CD8-positive, alpha-beta memory T cell (primary cell): ENCODE measurements at regions of chr6 and their contacts with region 1.

Region 1: DNA sequence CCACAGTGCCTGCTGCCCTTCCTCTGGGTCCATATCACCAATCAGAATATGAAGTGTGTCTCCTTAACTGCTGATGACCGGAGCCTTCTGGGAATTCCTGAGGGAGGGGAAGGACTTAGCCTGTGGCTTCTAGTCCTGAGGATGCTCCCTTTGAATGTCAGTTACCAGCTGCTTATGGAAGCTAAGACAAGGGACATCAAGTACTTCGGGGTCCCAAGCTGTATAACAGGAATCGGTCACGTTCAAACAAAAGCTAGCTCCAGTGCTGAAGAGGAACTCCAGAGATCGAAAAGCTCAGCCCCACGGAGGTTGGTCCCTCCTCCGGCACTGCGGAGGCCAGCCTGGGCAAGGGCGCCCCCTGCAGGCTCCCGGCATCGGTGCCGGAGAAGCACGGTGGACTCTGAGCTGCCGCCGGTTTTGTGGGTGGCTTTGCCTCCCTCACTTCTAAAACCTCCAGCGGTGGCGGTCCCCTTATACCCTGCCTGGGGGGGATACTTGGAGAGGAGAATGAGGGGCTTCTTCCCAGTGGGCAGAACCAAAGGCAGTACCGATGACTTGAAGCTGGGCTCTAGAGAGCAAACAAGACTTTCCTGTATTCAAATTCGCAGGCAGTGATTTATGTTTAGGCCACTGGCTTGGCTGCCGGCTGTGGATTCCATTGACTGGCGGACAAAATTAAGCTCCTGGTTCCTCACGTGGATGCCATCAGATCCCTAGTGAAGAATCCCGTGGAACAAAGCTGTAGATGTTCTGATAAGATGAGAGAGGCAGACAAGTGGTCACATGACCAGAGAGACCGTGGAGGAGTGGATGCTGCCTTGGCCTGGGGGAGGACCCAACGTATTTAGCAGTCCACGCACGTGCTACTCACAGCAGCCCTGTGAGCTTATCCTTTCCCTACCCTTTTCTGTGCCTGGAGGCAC is 16.2 kb upstream of the UBR2 start:
- DNase-seq: peak; percentile 75 to 87 (median 82)
- H3K4me3 ChIP-seq: peak overlapping the region; percentile 62
- H3K4me3 Mint-ChIP-seq: peak overlapping the region in 6 of 7 donors; percentile 66 to 74 (median 70)
- H3K27ac ChIP-seq: no peak overlapping the region
- H3K27ac Mint-ChIP-seq: peak overlapping the region in 4 of 8 donors; percentile 47 to 86 (median 59)
- H3K4me1 ChIP-seq: peaks cover 11% of the 10 kb centered on the region
- H3K4me1 Mint-ChIP-seq: peaks cover 6 to 12% (median 12%) of the 10 kb centered on the region in 3 donors
- H3K27me3 ChIP-seq: no peaks in the 10 kb centered on the region
- H3K27me3 Mint-ChIP-seq: peaks cover 2 to 5% of the 10 kb centered on the region in 2 donors

Region 2: GRCh38 chr6:42260972-42261371 is 286.7 kb before region 1 on chr6:
- CTCF ChIA-PET with region 1: interaction called, 57 read pairs
- POLR2A ChIA-PET with region 1: no interaction called
- DNase-seq: peak in 2 of 5 donors; percentile 33 to 61
- H3K4me3 ChIP-seq: no peak overlapping the region
- H3K4me3 Mint-ChIP-seq: peak overlapping the region in 1 of 7 donors; percentile 41
- H3K27ac ChIP-seq: no peak overlapping the region
- H3K27ac Mint-ChIP-seq: peak overlapping the region in 5 of 8 donors; percentile 2 to 84 (median 52)
- H3K4me1 ChIP-seq: no peaks in the 10 kb centered on the region
- H3K4me1 Mint-ChIP-seq: peaks cover 13 to 14% (median 13%) of the 10 kb centered on the region in 3 donors
- H3K27me3 ChIP-seq: no peaks in the 10 kb centered on the region
- H3K27me3 Mint-ChIP-seq: peaks cover 0 to 3% of the 10 kb centered on the region in 2 donors

Region 3: DNA sequence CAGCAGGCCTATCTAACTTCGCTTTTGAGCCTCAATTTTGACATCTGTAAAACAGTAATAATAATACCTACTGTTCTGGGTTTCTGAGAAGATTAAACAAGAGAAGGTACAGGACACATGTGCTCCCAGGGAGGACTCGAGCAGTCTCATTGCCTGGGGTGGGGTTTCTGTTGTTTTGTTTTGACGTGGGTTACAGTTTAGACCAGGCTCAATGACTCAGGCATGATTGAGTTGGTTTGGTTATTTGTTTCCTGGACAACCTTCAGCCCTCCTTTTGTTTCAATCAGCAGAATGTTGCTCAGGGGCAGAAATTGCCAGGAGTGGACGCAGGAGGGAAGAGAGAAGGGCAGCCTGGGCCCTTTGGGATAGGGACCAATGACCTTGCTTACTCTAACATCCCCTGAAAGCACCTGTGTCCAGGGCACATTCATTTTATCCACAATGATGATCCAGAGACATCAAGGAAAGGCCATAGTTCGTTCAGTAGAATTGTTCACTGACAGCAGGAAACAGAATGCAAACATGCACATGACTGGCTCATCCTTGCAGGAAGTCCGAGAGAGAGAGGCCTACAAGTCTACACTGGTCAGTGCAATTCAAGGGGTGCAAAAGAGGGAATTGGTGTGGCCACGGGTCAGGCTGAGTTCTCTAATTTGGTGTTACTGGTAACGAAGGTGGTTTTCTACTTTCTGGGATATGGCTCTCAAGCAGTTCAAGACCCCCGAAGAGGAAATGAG is 255.5 kb before region 1 on chr6:
- CTCF ChIA-PET with region 1: interaction called, 12 read pairs
- POLR2A ChIA-PET with region 1: interaction called, 3 read pairs
- DNase-seq: no peak
- H3K4me3 ChIP-seq: no peak overlapping the region
- H3K4me3 Mint-ChIP-seq: peak overlapping the region; percentile 41 to 78 (median 59)
- H3K27ac ChIP-seq: no peak overlapping the region
- H3K27ac Mint-ChIP-seq: peak overlapping the region; percentile 84 to 94 (median 87)
- H3K4me1 ChIP-seq: peaks cover 52% of the 10 kb centered on the region
- H3K4me1 Mint-ChIP-seq: peaks cover 72 to 86% (median 83%) of the 10 kb centered on the region in 3 donors
- H3K27me3 ChIP-seq: no peaks in the 10 kb centered on the region
- H3K27me3 Mint-ChIP-seq: no peaks in the 10 kb centered on the region

Region 4: DNA sequence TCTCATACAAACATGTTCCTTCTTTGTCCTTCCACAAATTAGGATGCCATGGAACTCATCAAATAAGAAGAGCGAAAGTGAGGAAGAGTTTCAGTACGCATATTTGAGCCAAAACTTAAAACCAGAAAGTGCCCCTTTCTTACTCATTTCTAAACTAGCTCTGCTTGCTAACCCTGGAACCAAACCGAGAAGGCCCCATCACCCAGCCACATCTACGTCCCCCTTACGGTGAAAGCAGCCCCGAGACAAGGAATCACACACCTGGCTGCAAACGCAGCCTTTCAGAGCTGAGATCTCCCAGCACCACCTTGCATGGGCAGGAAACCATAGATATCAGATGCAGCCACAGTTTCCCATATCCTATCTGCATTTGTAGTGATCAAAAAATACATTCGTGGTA is 124.4 kb before region 1 on chr6:
- CTCF ChIA-PET with region 1: interaction called, 10 read pairs
- POLR2A ChIA-PET with region 1: no interaction called
- DNase-seq: peak in 2 of 5 donors; percentile 15 to 29
- H3K4me3 ChIP-seq: no peak overlapping the region
- H3K4me3 Mint-ChIP-seq: peak overlapping the region; percentile 49 to 90 (median 87)
- H3K27ac ChIP-seq: no peak overlapping the region
- H3K27ac Mint-ChIP-seq: peak overlapping the region in 6 of 8 donors; percentile 70 to 89 (median 86)
- H3K4me1 ChIP-seq: peaks cover 35% of the 10 kb centered on the region
- H3K4me1 Mint-ChIP-seq: peaks cover 55 to 81% (median 78%) of the 10 kb centered on the region in 3 donors
- H3K27me3 ChIP-seq: no peaks in the 10 kb centered on the region
- H3K27me3 Mint-ChIP-seq: no peaks in the 10 kb centered on the region

Region 5: DNA sequence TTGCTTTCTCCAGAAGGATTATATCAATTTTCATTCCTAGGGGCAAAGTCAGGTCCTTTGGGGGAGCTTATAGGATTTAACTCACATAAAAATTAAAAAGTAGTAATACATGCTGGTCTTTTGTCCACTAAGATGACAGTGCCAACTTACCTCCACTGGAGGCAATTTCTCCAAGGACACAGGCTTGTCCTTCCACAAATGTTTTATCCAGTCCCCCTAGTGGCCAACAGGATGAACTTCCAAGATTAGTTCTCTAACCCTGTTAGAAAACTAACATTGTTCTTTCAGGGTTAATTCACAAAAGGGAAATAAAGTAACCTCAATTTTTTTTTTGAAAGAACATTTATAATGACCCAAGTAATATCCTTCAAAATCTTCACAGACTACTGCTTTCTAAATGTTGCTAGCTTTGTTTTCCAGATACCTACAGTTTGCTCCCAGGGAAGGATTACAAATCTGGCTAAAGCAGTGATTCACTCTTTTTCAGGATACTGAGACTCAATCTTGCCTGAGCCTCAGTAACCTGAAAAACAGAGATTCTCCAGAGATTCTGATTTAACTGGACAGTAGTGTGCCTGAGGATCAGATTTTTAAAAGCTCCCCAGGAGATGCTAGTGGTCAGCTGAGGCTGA is 15.5 kb before region 1 on chr6:
- CTCF ChIA-PET with region 1: interaction called, 43 read pairs
- POLR2A ChIA-PET with region 1: no interaction called
- DNase-seq: peak in 2 of 5 donors; percentile 26 to 36
- H3K4me3 ChIP-seq: no peak overlapping the region
- H3K4me3 Mint-ChIP-seq: no peak overlapping the region
- H3K27ac ChIP-seq: no peak overlapping the region
- H3K27ac Mint-ChIP-seq: no peak overlapping the region
- H3K4me1 ChIP-seq: no peaks in the 10 kb centered on the region
- H3K4me1 Mint-ChIP-seq: no peaks in the 10 kb centered on the region
- H3K27me3 ChIP-seq: no peaks in the 10 kb centered on the region
- H3K27me3 Mint-ChIP-seq: peaks cover 0 to 2% of the 10 kb centered on the region in 2 donors